Activated CD8-positive, alpha-beta T cell treated with anti-CD3 and anti-CD28 coated beads, Interleukin-2, amount 10 ng/mL, durations not matched to agents 7 days and 5 days (primary cell): ENCODE measurements at regions of chr14 and their contacts with region 1.

Region 1: GRCh38 chr14:98167705-98168104 is 1104.3 kb downstream of the BCL11B start:
- DNase-seq: peak; percentile 59
- ATAC-seq: peak; percentile 52
- H3K4me3 Mint-ChIP-seq: peak overlapping the region; percentile 26
- H3K27ac Mint-ChIP-seq: peak overlapping the region; percentile 50
- H3K4me1 Mint-ChIP-seq: peaks cover 84% of the 10 kb centered on the region
- H3K27me3 Mint-ChIP-seq: no peaks in the 10 kb centered on the region

Region 2: DNA sequence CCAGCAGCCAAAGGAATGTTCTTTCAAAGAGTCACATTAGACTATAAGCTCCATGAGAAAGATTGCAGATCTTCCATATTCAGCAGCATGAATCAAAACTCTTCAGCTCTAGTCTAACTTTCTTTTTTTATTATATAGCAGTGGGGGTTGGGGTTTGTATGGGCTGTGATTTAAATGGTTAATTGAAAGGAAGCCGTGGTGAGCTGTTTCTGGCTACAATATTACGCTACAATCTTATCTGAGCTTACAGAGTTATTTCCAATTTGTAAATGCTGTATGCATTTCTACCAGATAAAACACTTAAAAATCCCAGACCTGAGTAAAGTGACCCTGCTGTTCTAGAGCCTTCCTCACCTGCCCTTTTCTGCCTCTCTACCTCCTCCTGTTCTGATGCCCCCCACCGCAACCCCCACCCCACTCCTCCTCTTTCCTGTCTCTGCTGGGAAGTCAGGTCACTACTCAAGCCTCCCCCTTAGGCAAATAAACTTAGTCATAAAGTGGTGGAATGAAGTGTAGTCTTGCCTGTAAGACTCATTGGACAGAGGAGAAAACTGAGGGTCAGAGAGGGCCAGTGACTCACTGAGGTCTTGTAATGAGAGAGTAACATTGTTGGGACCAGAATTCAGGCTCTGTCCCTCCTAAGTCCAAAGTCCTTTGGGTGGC is 14.8 kb after region 1 on chr14:
- CTCF ChIA-PET with region 1: interaction called, 45 read pairs
- POLR2A ChIA-PET with region 1: interaction called, 39 read pairs
- DNase-seq: no peak
- ATAC-seq: peak; percentile 24
- H3K4me3 Mint-ChIP-seq: peak overlapping the region; percentile 37
- H3K27ac Mint-ChIP-seq: peak overlapping the region; percentile 87
- H3K4me1 Mint-ChIP-seq: peaks cover 87% of the 10 kb centered on the region
- H3K27me3 Mint-ChIP-seq: no peaks in the 10 kb centered on the region

Region 3: GRCh38 chr14:98189062-98189461 is 21.4 kb after region 1 on chr14:
- CTCF ChIA-PET with region 1: interaction called, 45 read pairs
- POLR2A ChIA-PET with region 1: interaction called, 39 read pairs
- DNase-seq: peak; percentile 68
- ATAC-seq: peak; percentile 69
- H3K4me3 Mint-ChIP-seq: peak overlapping the region; percentile 58
- H3K27ac Mint-ChIP-seq: peak overlapping the region; percentile 92
- H3K4me1 Mint-ChIP-seq: peaks cover 96% of the 10 kb centered on the region
- H3K27me3 Mint-ChIP-seq: no peaks in the 10 kb centered on the region

Region 4: GRCh38 chr14:98198385-98198784 is 30.7 kb after region 1 on chr14:
- CTCF ChIA-PET with region 1: interaction called, 13 read pairs
- POLR2A ChIA-PET with region 1: no interaction called
- DNase-seq: peak; percentile 81
- ATAC-seq: peak; percentile 80
- H3K4me3 Mint-ChIP-seq: peak overlapping the region; percentile 45
- H3K27ac Mint-ChIP-seq: peak overlapping the region; percentile 76
- H3K4me1 Mint-ChIP-seq: peaks cover 80% of the 10 kb centered on the region
- H3K27me3 Mint-ChIP-seq: no peaks in the 10 kb centered on the region